ENCODE measurements at regions of chr3 and their contacts with region 1.

Region 1: DNA sequence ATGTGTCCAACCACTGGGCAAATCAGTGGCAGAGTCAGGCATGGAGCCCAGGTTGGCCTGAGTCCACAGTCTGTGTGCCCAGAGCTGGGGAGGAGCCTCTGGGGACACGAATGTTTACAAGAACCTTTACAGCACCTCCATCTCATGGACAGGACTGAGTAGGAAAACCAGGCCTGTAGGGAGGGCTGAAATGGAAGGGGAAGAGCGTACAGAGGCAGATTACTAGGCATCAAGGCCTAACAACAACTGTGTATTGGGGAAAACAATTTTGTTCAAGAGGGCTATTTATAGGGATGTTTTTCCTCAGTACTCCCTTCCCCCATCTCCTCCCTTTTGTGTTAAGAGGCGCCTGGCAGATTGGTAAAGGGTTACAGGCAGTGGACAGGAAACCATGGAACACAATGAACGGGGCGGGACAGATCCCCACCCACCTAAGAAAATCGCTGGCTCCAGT is 15.1 kb upstream of the ARHGAP31 start:
- DNase-seq: peak; percentile 93
- H3K4me3 ChIP-seq: no peak overlapping the region
- H3K27ac ChIP-seq: peak overlapping the region; percentile 66
- H3K4me1 ChIP-seq: peaks cover 17% of the 10 kb centered on the region
- H3K27me3 ChIP-seq: no peaks in the 10 kb centered on the region
- CTCF ChIP-seq: no peak
- POLR2A ChIP-seq: peak; percentile 47

Region 2: GRCh38 chr3:118075873-118076272 is 1203.3 kb before region 1 on chr3:
- CTCF ChIA-PET with region 1: no interaction called
- POLR2A ChIA-PET with region 1: no interaction called
- dilution Hi-C with region 1: no loop called
- intact Hi-C with region 1: no loop called
- DNase-seq: no peak
- H3K4me3 ChIP-seq: no peak overlapping the region
- H3K27ac ChIP-seq: no peak overlapping the region
- H3K4me1 ChIP-seq: no peaks in the 10 kb centered on the region
- H3K27me3 ChIP-seq: no peaks in the 10 kb centered on the region
- CTCF ChIP-seq: no peak
- POLR2A ChIP-seq: no peak

Region 3: GRCh38 chr3:118868051-118868450 is 411.1 kb before region 1 on chr3:
- CTCF ChIA-PET with region 1: no interaction called
- POLR2A ChIA-PET with region 1: no interaction called
- dilution Hi-C with region 1: no loop called
- intact Hi-C with region 1: no loop called
- DNase-seq: no peak
- H3K4me3 ChIP-seq: no peak overlapping the region
- H3K27ac ChIP-seq: no peak overlapping the region
- H3K4me1 ChIP-seq: no peaks in the 10 kb centered on the region
- H3K27me3 ChIP-seq: no peaks in the 10 kb centered on the region
- CTCF ChIP-seq: no peak
- POLR2A ChIP-seq: no peak

Region 4: DNA sequence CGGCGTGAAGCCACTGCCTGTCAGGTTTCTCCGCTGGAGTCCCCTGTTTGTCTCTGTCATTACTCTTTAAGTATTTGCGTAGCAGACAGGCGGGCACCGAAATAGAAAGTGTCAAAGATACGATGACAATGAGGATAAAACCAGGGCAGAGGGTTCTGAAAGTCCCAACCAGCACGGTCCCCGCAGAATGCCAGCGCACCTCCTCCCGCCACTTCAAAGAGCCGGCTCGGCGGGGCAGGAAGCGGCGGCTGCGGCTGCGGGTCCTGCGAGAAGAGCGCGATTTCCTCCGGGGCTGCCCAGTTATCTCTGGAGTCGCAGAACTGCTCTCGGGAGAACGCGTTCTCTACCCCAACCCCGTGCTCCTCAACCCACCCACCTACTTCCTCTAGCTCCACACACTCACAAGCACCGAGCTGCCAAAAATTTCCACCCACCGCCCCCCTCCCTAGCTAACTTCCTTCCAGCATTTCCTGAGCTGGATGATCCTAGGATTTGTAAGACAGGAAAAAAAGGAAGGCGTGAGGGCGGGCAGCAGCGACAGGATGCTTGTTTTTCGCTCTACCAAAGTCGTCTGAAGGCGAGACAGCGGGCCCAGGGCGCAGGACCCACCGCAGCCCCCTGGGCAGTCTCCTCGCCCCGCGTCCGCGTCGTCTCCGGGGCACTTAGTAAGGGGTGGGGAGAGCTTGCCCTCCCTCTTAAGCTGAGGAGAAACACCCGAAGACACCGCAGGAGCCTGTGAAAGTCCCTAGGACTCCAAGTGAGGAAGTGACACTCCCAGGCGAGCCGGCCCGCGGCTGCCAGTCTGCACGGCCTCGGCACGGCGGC is 15.0 kb after region 1 on chr3 and contains the start of gene ARHGAP31:
- CTCF ChIA-PET with region 1: interaction called, 5 read pairs
- POLR2A ChIA-PET with region 1: interaction called, 4 read pairs
- dilution Hi-C with region 1: no loop called
- intact Hi-C with region 1: loop called (anchors 1 kb)
- DNase-seq: peak; percentile 90
- H3K4me3 ChIP-seq: peak within 1 kb of the TSS; percentile 84 to 92 (median 86)
- H3K27ac ChIP-seq: peak within 1 kb of the TSS; percentile 78
- H3K4me1 ChIP-seq: peaks cover 32% of the 10 kb centered on the region
- H3K27me3 ChIP-seq: no peaks in the 10 kb centered on the region
- CTCF ChIP-seq: no peak
- POLR2A ChIP-seq: peak; percentile 77
- total RNA-seq, gene ARHGAP31: 64.8 and 65.8 TPM in 2 replicates

Region 5: GRCh38 chr3:119352849-119353502 is 73.8 kb after region 1 on chr3:
- CTCF ChIA-PET with region 1: interaction called, 51 read pairs
- POLR2A ChIA-PET with region 1: no interaction called
- dilution Hi-C with region 1: no loop called
- intact Hi-C with region 1: loop called (anchors 1 kb)
- DNase-seq: peak; percentile 63
- H3K4me3 ChIP-seq: no peak overlapping the region
- H3K27ac ChIP-seq: no peak overlapping the region
- H3K4me1 ChIP-seq: peaks cover 53% of the 10 kb centered on the region
- H3K27me3 ChIP-seq: no peaks in the 10 kb centered on the region
- CTCF ChIP-seq: no peak
- POLR2A ChIP-seq: no peak

Region 6: GRCh38 chr3:119388577-119388976 is 109.4 kb after region 1 on chr3:
- CTCF ChIA-PET with region 1: interaction called, 22 read pairs
- POLR2A ChIA-PET with region 1: no interaction called
- dilution Hi-C with region 1: no loop called
- intact Hi-C with region 1: loop called (anchors 1 kb)
- DNase-seq: no peak
- H3K4me3 ChIP-seq: no peak overlapping the region
- H3K27ac ChIP-seq: no peak overlapping the region
- H3K4me1 ChIP-seq: no peaks in the 10 kb centered on the region
- H3K27me3 ChIP-seq: no peaks in the 10 kb centered on the region
- CTCF ChIP-seq: no peak
- POLR2A ChIP-seq: no peak

Region 7: GRCh38 chr3:119498186-119498987 is 219.3 kb after region 1 on chr3 and contains the start of gene TIMMDC1:
- CTCF ChIA-PET with region 1: no interaction called
- POLR2A ChIA-PET with region 1: no interaction called
- dilution Hi-C with region 1: no loop called
- intact Hi-C with region 1: loop called (anchors 2 kb)
- DNase-seq: peak; percentile 97
- H3K4me3 ChIP-seq: peak within 1 kb of the TSS; percentile 82 to 85 (median 83)
- H3K27ac ChIP-seq: peak within 1 kb of the TSS; percentile 80
- H3K4me1 ChIP-seq: peaks cover 26% of the 10 kb centered on the region
- H3K27me3 ChIP-seq: no peaks in the 10 kb centered on the region
- CTCF ChIP-seq: no peak
- POLR2A ChIP-seq: peak; percentile 86
- total RNA-seq, gene TIMMDC1: 76.2 and 80.8 TPM in 2 replicates

Measured in endothelial cell of umbilical vein (primary cell).